ENCODE measurements at regions of chr16 and their contacts with region 1.

Region 1: DNA sequence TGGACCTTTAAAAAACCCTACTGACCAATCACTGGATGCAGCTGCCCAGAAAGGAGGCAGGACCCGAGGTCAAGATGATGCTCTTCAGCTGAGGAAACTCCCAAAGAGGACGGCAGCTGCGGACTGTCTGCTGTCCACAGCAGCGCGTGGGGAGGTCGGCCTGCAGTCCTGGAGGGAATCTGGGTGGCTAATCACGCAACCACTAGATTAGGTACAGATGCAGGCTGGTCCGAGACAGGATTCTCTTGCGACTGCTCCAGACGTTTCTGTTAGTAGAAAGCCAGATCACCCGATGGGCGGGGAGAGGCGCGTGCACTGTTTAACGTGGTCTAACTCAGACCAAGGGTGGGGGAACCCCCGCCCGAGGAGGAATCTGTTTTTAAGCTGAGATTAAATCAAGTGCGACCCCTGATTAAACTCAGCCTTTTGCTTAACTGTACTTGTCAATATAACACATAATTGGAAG is 8.8 kb downstream of the CTRB2 start:
- DNase-seq: no peak
- H3K4me3 ChIP-seq: no peak overlapping the region
- H3K4me3 Mint-ChIP-seq: no peak overlapping the region
- H3K27ac ChIP-seq: no peak overlapping the region
- H3K27ac Mint-ChIP-seq: no peak overlapping the region
- H3K4me1 ChIP-seq: peaks cover 14% of the 10 kb centered on the region
- H3K4me1 Mint-ChIP-seq: peaks cover 12 to 22% (median 14%) of the 10 kb centered on the region in 4 donors
- H3K27me3 ChIP-seq: no peaks in the 10 kb centered on the region
- H3K27me3 Mint-ChIP-seq: peaks cover 10 to 14% of the 10 kb centered on the region in 2 donors

Region 2: DNA sequence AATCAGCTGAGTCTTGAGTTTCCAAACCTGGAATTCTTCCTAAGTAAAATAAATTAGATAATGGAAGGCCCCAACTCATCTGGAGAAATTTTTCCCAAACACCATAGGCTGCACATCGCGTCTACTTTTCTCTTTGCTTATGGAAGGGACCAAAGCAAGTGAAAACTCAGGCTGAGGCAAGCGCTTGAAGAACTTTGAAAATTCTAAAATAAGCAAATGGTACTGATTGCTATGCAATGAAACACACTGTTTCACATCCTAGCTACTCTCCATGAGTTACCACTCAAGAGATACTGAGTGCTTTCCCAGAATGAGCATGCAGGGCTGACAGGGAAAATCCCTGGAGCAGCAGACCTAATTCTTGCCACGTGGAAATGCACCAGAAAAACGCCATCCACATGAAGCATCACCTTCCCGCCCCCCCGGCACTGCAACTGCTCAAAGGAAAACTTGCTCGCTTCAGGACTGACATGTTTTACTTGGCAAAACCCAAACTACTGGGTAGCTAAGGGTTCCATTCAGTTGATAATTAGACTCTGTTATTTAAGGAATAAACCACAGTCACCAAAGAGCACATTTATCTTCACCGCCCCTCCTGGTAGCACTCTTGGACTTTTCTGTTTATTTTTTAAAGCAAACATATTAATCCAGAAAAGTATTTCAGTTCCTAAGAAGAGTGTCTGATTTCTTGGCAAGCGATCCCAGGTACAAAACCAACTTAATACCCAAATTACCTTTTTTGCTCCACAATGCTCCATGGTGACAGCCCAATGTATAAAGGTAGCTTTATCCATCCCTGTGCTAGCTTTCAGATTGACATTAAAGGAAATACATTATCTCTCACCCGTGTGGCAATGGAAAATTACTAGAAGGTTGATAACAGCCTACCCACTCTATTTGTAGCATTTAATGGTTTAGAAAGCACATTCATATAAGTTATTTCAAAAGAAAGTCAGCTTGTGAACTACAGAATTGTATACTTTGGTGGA is 275.7 kb before region 1 on chr16:
- CTCF ChIA-PET with region 1: no interaction called
- POLR2A ChIA-PET with region 1: no interaction called
- intact Hi-C with region 1: no loop called
- DNase-seq: no peak
- H3K4me3 ChIP-seq: no peak overlapping the region
- H3K4me3 Mint-ChIP-seq: no peak overlapping the region
- H3K27ac ChIP-seq: no peak overlapping the region
- H3K27ac Mint-ChIP-seq: no peak overlapping the region
- H3K4me1 ChIP-seq: no peaks in the 10 kb centered on the region
- H3K4me1 Mint-ChIP-seq: no peaks in the 10 kb centered on the region
- H3K27me3 ChIP-seq: no peaks in the 10 kb centered on the region
- H3K27me3 Mint-ChIP-seq: no peaks in the 10 kb centered on the region

Region 3: GRCh38 chr16:75129491-75130149 is 68.5 kb before region 1 on chr16:
- CTCF ChIA-PET with region 1: no interaction called
- POLR2A ChIA-PET with region 1: no interaction called
- intact Hi-C with region 1: no loop called
- DNase-seq: no peak
- H3K4me3 ChIP-seq: no peak overlapping the region
- H3K4me3 Mint-ChIP-seq: peak overlapping the region in 2 of 8 donors; percentile 1 to 58
- H3K27ac ChIP-seq: no peak overlapping the region
- H3K27ac Mint-ChIP-seq: peak overlapping the region in 1 of 7 donors; percentile 57
- H3K4me1 ChIP-seq: peaks cover 9% of the 10 kb centered on the region
- H3K4me1 Mint-ChIP-seq: peaks cover 6 to 20% (median 11%) of the 10 kb centered on the region in 4 donors
- H3K27me3 ChIP-seq: no peaks in the 10 kb centered on the region
- H3K27me3 Mint-ChIP-seq: peaks cover 3 to 4% of the 10 kb centered on the region in 2 donors

Region 4: GRCh38 chr16:75229172-75230031 is 31.2 kb after region 1 on chr16:
- CTCF ChIA-PET with region 1: interaction called, 53 read pairs
- POLR2A ChIA-PET with region 1: no interaction called
- intact Hi-C with region 1: loop called (anchors 1 kb)
- DNase-seq: no peak
- H3K4me3 ChIP-seq: no peak overlapping the region
- H3K4me3 Mint-ChIP-seq: no peak overlapping the region
- H3K27ac ChIP-seq: no peak overlapping the region
- H3K27ac Mint-ChIP-seq: no peak overlapping the region
- H3K4me1 ChIP-seq: peaks cover 6% of the 10 kb centered on the region
- H3K4me1 Mint-ChIP-seq: peaks cover 0 to 5% (median under 1%) of the 10 kb centered on the region in 4 donors
- H3K27me3 ChIP-seq: no peaks in the 10 kb centered on the region
- H3K27me3 Mint-ChIP-seq: peaks cover 0 to 1% of the 10 kb centered on the region in 2 donors

Region 5: GRCh38 chr16:75385507-75386152 is 187.5 kb after region 1 on chr16:
- CTCF ChIA-PET with region 1: interaction called, 137 read pairs
- POLR2A ChIA-PET with region 1: interaction called, 6 read pairs
- intact Hi-C with region 1: loop called (anchors 1 kb)
- DNase-seq: peak in 4 of 5 donors; percentile 53 to 63 (median 60)
- H3K4me3 ChIP-seq: no peak overlapping the region
- H3K4me3 Mint-ChIP-seq: no peak overlapping the region
- H3K27ac ChIP-seq: no peak overlapping the region
- H3K27ac Mint-ChIP-seq: no peak overlapping the region
- H3K4me1 ChIP-seq: peaks cover 26% of the 10 kb centered on the region
- H3K4me1 Mint-ChIP-seq: peaks cover 20 to 38% (median 34%) of the 10 kb centered on the region in 4 donors
- H3K27me3 ChIP-seq: no peaks in the 10 kb centered on the region
- H3K27me3 Mint-ChIP-seq: no peaks in the 10 kb centered on the region

Region 6: DNA sequence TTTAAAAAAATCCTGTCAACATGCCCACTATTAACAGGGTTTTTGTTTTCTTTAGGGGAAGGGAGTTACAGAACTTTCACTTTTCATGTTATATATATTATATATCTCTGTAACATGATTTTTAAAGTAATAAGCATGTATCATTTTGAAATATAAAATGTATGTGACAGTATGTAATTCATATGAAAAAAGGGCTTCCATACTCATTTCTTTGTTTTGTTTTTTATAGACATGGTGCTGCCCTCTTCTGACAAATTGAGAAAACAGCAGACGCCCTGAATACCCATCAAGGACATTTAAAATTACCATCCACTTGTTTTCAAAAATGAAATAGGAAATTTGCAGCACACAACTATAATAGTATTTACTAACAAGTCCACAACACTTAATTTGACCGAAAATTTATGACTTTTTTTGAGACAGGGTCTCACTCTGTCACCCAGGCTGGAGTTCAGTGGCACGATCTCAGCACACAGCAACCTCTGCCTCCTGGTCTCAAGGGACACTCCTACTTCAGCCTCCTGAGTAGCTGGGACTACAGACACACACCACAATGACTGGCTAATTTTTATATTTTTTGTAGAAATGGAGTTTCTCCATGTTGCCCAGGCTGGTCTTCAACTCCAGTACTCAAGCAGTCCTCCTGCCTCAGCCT is 204.8 kb after region 1 on chr16:
- CTCF ChIA-PET with region 1: interaction called, 156 read pairs
- POLR2A ChIA-PET with region 1: no interaction called
- intact Hi-C with region 1: loop called (anchors 1 kb)
- DNase-seq: peak in 4 of 5 donors; percentile 23 to 35 (median 32)
- H3K4me3 ChIP-seq: no peak overlapping the region
- H3K4me3 Mint-ChIP-seq: no peak overlapping the region
- H3K27ac ChIP-seq: no peak overlapping the region
- H3K27ac Mint-ChIP-seq: peak overlapping the region in 1 of 7 donors; percentile 51
- H3K4me1 ChIP-seq: no peaks in the 10 kb centered on the region
- H3K4me1 Mint-ChIP-seq: peaks cover 0 to 3% (median 1%) of the 10 kb centered on the region in 4 donors
- H3K27me3 ChIP-seq: no peaks in the 10 kb centered on the region
- H3K27me3 Mint-ChIP-seq: no peaks in the 10 kb centered on the region